ENCODE measurements at regions of chr7 and their contacts with region 1.

Region 1: DNA sequence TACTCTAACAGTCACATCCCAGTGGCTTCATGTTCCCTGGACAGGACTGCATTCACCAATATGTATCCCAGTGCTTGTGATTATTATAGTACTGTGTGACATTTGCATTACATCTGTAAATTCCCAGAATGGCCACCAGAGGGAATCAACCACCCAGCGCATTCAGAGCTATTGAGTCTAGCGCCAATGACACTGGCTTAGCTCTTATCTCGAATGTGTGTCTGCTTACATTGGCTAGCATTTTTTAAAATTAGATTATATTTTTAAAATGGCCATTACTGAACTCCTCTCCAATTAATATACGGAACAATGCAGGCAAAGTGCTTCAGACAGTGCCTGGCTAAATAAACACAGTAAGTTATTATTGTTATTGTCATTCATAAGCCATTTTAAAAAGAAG is 36.3 kb downstream of the TRIL start:
- DNase-seq: peak; percentile 57 to 64 (median 60)
- ATAC-seq: peak; percentile 98
- H3K4me3 ChIP-seq: no peak overlapping the region
- H3K27ac ChIP-seq: no peak overlapping the region
- H3K4me1 ChIP-seq: no peaks in the 10 kb centered on the region
- H3K27me3 ChIP-seq: peaks cover 0 to 7% of the 10 kb centered on the region in 2 experiments; a peak in 2 of 5 replicates
- CTCF ChIP-seq: peak; percentile 74 to 82 (median 77)
- EP300 ChIP-seq: no peak
- POLR2A ChIP-seq: no peak
- RAD21 ChIP-seq: peak; percentile 31 to 62

Region 2: DNA sequence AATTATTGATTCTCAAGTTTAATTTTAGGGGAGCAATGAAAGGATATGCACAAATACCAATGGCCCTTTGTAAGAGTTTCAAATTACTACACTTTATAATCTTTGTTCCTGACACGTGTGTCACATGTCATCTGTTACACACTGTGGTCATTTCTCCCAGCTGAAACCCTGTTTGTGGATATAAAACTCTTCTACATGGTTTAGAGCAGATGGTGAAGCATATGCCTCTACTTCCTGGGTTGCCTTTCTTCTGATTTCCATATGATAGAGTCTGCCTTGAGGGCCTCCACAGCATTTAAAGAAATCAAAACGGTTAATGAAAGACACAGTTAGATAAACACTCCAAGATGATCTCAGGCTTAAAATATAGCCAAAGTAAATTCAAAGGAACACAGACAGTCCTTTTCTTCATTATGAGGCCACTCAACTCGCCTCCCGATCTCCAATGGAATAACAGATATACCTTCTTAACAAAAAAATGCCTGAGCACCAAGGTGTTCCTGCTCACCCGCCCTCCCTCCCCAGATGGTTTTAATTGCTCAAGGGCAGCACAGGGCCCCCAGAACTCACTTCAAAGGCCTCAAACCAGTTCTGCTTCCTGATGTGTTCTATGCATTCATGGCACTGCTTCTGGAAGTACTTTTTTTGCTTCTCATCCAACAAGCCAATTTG is 149.5 kb after region 1 on chr7:
- CTCF ChIA-PET with region 1: no interaction called
- POLR2A ChIA-PET with region 1: no interaction called
- in situ Hi-C with region 1: no loop called
- intact Hi-C with region 1: no loop called
- DNase-seq: no peak
- ATAC-seq: no peak
- H3K4me3 ChIP-seq: no peak overlapping the region
- H3K27ac ChIP-seq: no peak overlapping the region
- H3K4me1 ChIP-seq: no peaks in the 10 kb centered on the region
- H3K27me3 ChIP-seq: no peaks in the 10 kb centered on the region; a peak in 1 of 5 replicates
- CTCF ChIP-seq: no peak
- EP300 ChIP-seq: no peak
- POLR2A ChIP-seq: no peak
- RAD21 ChIP-seq: no peak

Region 3: DNA sequence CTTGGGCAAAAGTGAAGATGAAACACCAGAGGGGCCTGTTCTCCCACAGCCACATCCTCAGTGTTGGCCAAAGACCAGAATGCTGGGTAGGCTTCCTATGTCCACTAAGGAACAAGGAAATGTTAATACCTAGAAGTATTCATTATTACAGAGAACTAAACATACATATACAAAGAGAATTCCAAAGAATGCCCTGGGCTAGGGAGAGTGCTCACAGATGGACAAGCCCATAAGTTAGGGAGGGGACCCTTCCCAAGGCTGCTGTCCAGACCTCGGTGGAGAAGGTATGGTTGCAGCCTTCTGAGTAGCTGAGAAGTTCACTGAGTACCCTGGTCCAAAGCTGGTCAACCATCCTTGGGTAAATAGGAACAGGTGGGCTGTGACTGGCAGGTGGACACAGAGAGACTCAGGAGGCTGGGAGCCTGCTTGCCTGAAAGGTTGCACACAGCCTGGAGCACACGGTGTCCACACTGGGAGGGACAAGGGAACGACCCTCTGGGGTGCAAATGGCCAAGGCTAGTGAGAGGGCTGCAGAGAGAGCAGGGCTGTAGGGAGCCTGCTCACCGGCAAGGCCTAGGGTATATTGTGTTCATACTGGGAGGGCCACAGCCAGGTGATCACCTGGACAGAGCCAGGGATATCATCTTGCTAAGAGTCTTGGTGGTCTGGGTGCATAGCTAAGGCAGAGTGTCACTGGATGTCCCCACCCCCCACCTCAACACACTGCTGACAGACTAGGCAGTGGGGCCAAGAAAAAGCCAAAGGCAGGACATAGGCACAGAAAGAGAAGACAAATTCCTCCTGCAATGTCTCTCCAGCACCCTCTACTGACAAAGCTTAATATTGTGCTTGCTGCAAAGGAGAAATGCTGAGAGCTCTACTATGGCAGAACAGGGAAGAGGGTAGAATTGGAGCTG is 184.2 kb after region 1 on chr7:
- CTCF ChIA-PET with region 1: interaction called, 25 read pairs
- POLR2A ChIA-PET with region 1: no interaction called
- in situ Hi-C with region 1: loop called (anchors 5 kb)
- intact Hi-C with region 1: loop called (anchors 1 kb)
- DNase-seq: peak in 1 of 4 experiments; percentile 46
- ATAC-seq: peak; percentile 84
- H3K4me3 ChIP-seq: no peak overlapping the region
- H3K27ac ChIP-seq: no peak overlapping the region
- H3K4me1 ChIP-seq: no peaks in the 10 kb centered on the region
- H3K27me3 ChIP-seq: no peaks in the 10 kb centered on the region
- CTCF ChIP-seq: peak; percentile 62 to 79 (median 63)
- EP300 ChIP-seq: no peak
- POLR2A ChIP-seq: no peak
- RAD21 ChIP-seq: peak; percentile 51 to 66

Region 4: DNA sequence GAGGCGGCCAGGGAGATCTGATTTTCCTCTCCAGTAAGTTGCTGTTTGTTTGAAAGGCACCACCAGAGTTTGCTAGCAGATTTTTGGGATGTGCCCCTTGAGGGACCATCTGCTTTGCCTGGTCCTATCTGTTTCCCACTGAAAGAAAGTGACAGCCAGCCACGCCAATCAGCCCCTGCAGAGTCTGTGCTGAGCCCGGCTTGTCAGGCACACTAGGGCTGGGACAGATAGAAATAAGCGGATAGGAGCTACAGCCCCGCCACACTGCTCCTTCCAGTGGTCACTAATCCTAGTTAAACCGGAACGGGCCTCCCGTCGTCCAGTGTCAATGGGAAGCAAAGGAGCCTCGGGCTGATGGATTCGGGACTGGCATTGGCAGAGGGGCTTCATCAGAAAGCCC is 479.9 kb after region 1 on chr7:
- CTCF ChIA-PET with region 1: no interaction called
- POLR2A ChIA-PET with region 1: no interaction called
- in situ Hi-C with region 1: loop called (anchors 5 kb)
- intact Hi-C with region 1: no loop called
- DNase-seq: no peak
- ATAC-seq: no peak
- H3K4me3 ChIP-seq: no peak overlapping the region
- H3K27ac ChIP-seq: no peak overlapping the region
- H3K4me1 ChIP-seq: no peaks in the 10 kb centered on the region
- H3K27me3 ChIP-seq: peaks cover 7 to 33% of the 10 kb centered on the region in 2 experiments; a peak in 3 of 5 replicates
- CTCF ChIP-seq: no peak
- EP300 ChIP-seq: no peak
- POLR2A ChIP-seq: no peak
- RAD21 ChIP-seq: no peak

Measured in K562 (cell line).